Panc1 (cell line): ENCODE measurements at regions of chr11 and their contacts with region 1.

Region 1: GRCh38 chr11:102853956-102854355 is 10.5 kb upstream of the MMP3 start:
- DNase-seq: no peak
- ATAC-seq: no peak
- H3K4me3 ChIP-seq: no peak overlapping the region
- H3K27ac ChIP-seq: no peak overlapping the region
- H3K4me1 ChIP-seq: no peaks in the 10 kb centered on the region
- H3K27me3 ChIP-seq: peaks cover 25% of the 10 kb centered on the region
- CTCF ChIP-seq: no peak

Region 2: GRCh38 chr11:102868339-102868738 is 14.4 kb after region 1 on chr11:
- CTCF ChIA-PET with region 1: no interaction called
- POLR2A ChIA-PET with region 1: interaction called, 17 read pairs
- in situ Hi-C with region 1: no loop called
- intact Hi-C with region 1: no loop called
- DNase-seq: no peak
- ATAC-seq: no peak
- H3K4me3 ChIP-seq: no peak overlapping the region
- H3K27ac ChIP-seq: no peak overlapping the region
- H3K4me1 ChIP-seq: no peaks in the 10 kb centered on the region
- H3K27me3 ChIP-seq: peaks cover 10% of the 10 kb centered on the region; the same call in 1 of the 2 replicates
- CTCF ChIP-seq: no peak